SK-N-SH (cell line): ENCODE measurements at regions of chr1 and their contacts with region 1.

Region 1: DNA sequence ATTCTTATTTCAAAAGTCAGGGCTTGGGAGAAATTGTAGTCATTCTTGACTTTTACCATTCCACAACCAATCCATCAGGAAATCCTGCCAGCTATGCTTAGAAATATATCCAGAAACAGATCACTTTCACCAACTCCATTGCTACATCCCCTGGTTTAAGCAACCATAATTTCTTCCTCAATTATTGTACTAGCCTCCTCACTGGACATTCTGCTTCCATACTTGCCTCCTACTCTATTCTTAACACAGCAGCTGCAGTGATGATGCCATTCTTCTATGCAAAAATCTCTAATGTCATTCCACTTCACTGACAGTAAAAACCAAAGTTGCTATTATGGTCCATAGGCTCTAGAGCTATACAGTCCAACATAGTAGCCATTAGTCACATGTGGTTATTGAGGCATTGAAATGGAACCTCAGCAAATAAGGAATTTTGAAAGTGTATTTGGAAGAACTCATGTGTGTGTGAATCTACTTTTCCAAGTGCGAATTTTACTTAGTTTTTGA is 110.7 kb upstream of the KIAA0040 start:
- DNase-seq: no peak
- H3K4me3 ChIP-seq: no peak overlapping the region
- H3K27ac ChIP-seq: no peak overlapping the region
- H3K4me1 ChIP-seq: no peaks in the 10 kb centered on the region
- H3K27me3 ChIP-seq: no peaks in the 10 kb centered on the region
- CTCF ChIP-seq: no peak
- EP300 ChIP-seq: no peak
- RAD21 ChIP-seq: no peak

Region 2: DNA sequence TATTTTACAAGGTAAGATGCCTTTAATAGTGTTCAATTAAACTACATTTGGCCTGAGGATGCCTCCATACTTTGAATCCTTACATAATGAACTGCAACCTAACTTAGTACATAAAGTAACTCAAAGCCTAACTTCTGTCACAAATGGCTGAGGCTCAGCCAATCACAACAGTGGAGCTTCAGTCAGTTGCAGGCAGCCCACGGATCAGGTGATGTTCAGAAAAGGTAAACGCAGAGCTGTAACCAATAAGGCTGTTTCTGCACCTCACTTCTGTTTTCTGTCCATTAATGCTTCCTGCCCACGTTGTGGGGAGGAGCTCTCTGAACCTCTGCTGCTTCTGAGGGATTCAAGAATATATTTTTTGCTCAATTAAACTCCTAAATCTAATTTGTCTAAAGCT is 15.9 kb before region 1 on chr1:
- CTCF ChIA-PET with region 1: no interaction called
- POLR2A ChIA-PET with region 1: no interaction called
- DNase-seq: no peak
- H3K4me3 ChIP-seq: no peak overlapping the region
- H3K27ac ChIP-seq: no peak overlapping the region
- H3K4me1 ChIP-seq: no peaks in the 10 kb centered on the region; a peak in 1 of 4 replicates
- H3K27me3 ChIP-seq: no peaks in the 10 kb centered on the region
- CTCF ChIP-seq: no peak
- EP300 ChIP-seq: no peak
- RAD21 ChIP-seq: no peak

Region 3: DNA sequence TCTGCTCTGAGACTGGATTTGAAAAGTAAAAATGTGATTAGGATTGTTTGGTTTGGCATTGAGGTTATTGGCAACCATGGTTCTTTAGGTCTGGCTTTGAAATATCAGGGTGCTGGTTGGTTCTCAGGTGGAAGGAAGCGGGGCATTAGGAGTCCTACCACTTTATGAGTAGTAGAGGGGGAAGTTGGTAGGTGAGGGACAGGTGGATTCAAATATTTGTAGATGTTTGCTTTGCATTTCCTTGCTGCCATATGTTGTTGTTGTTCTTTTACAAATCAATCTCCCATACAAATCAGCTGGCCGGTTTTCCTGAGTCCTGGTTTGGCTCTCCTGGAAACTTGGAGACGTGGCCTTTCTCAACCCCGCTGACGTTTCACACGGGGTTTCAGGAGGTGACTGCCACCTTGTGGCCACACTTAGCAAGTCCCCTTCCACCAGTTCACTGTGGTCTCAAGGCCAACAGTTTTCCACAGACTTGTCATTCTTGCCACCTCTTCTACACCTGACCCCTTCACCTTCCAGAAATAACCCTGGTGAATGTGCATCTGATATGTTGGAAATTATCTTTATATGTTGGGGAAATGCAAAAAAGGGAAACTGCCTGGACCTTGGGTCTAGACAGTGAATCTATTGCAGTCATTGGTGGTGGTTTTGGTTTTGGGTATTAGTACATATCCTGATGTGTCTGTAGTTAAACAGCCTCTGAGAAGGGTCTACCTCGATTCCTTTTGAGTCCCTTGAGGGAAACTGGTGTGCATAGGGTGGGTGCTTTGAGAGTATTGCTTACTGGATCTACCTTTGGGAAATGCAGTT is 16.4 kb after region 1 on chr1:
- CTCF ChIA-PET with region 1: interaction called, 20 read pairs
- POLR2A ChIA-PET with region 1: no interaction called
- DNase-seq: peak; percentile 74
- H3K4me3 ChIP-seq: peak overlapping the region in 1 of 2 experiments; percentile 42; a peak in 1 of 4 replicates
- H3K27ac ChIP-seq: no peak overlapping the region
- H3K4me1 ChIP-seq: peaks cover 0 to 3% of the 10 kb centered on the region in 2 experiments; a peak in 1 of 4 replicates
- H3K27me3 ChIP-seq: no peaks in the 10 kb centered on the region
- CTCF ChIP-seq: peak; percentile 56
- EP300 ChIP-seq: no peak
- RAD21 ChIP-seq: peak; percentile 89